Activated naive CD4-positive, alpha-beta T cell treated with anti-CD3 and anti-CD28 coated beads for 36 hours (primary cell): ENCODE measurements at regions of chr18 and their contacts with region 1.

Region 1: DNA sequence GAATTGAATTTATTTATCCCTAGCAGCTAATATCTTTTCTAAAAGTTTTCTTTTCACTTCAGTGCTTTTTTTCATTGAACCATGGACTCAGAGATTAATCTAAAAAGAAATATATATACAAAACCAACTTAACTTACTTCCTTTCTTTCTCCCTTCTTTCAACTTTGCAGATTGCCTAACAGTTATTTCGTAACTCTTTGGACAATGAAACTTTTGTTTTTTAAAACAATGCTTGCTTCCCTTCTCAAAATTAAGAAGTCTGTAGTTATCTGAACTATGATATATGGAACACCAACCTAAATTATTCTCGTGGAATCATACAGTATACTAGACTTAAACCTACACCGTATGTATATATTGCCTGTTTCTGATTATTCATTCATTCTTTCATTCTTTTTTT is 62.9 kb downstream of the MIB1 start:
- DNase-seq: no peak
- H3K4me3 Mint-ChIP-seq: no peak overlapping the region
- H3K27ac Mint-ChIP-seq: no peak overlapping the region
- H3K4me1 Mint-ChIP-seq: no peaks in the 10 kb centered on the region
- H3K27me3 Mint-ChIP-seq: no peaks in the 10 kb centered on the region

Region 2: GRCh38 chr18:21760321-21760720 is 43.2 kb before region 1 on chr18:
- CTCF ChIA-PET with region 1: no interaction called
- intact Hi-C with region 1: loop called (anchors 5 kb)
- DNase-seq: no peak
- H3K4me3 Mint-ChIP-seq: no peak overlapping the region
- H3K27ac Mint-ChIP-seq: no peak overlapping the region
- H3K4me1 Mint-ChIP-seq: peaks cover 8% of the 10 kb centered on the region
- H3K27me3 Mint-ChIP-seq: no peaks in the 10 kb centered on the region